ENCODE measurements at regions of chr11 and their contacts with region 1.

Region 1: GRCh38 chr11:130069684-130070108 is at the start of gene APLP2:
- DNase-seq: peak; percentile 96
- H3K4me3 ChIP-seq: peak within 1 kb of the TSS; percentile 80 to 91 (median 83)
- H3K27ac ChIP-seq: peak within 1 kb of the TSS; percentile 77
- H3K4me1 ChIP-seq: peaks cover 22% of the 10 kb centered on the region
- H3K27me3 ChIP-seq: no peaks in the 10 kb centered on the region
- CTCF ChIP-seq: no peak
- total RNA-seq, gene APLP2: 348 to 450 TPM

Region 2: DNA sequence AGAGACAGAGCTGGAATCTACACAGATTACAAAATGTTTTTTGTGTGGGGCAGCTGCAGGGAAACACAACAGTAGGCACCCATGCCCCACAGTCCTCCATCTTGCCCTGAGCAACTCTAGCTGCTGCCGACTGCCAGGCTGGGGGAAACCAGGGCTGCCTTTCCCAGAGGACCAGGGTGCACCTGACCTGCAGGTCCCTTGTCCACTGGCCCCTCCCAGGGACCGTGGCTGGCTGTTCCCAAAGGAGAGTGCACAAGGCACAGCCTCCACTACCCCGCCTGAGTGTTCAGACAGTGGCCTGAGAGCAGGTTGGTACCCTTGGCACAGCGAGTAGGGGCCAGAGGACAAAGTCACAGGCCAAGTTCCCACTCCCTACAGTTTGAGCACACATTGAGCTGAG is 512.3 kb before region 1 on chr11:
- CTCF ChIA-PET with region 1: no interaction called
- dilution Hi-C with region 1: no loop called
- in situ Hi-C with region 1: no loop called
- intact Hi-C with region 1: no loop called
- DNase-seq: no peak
- H3K4me3 ChIP-seq: no peak overlapping the region
- H3K27ac ChIP-seq: no peak overlapping the region
- H3K4me1 ChIP-seq: no peaks in the 10 kb centered on the region
- H3K27me3 ChIP-seq: peaks cover 3% of the 10 kb centered on the region
- CTCF ChIP-seq: no peak

Region 3: DNA sequence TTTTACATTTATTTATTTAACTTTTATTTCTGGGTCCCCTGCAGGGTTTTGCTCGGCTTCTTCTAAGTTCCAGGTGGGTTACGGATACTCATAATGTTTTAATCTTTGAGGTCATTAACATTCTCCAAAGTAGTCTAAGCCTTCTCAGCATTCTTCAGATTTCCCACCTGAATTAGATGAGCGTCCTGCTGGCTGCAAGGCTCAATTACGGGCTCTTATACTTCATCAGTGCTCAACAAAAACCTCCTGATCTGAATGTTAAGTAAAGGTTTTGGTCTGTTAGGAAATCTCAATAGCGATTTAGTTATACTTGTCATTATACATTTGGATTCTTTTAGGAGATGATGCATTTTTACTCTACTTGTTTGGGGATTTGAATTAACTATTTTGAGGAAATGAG is 147.0 kb before region 1 on chr11:
- CTCF ChIA-PET with region 1: interaction called, 3 read pairs
- dilution Hi-C with region 1: no loop called
- in situ Hi-C with region 1: no loop called
- intact Hi-C with region 1: loop called (anchors 2 kb)
- DNase-seq: no peak
- H3K4me3 ChIP-seq: no peak overlapping the region
- H3K27ac ChIP-seq: no peak overlapping the region
- H3K4me1 ChIP-seq: no peaks in the 10 kb centered on the region
- H3K27me3 ChIP-seq: no peaks in the 10 kb centered on the region
- CTCF ChIP-seq: no peak

Region 4: GRCh38 chr11:129946256-129946655 is 123.4 kb before region 1 on chr11:
- CTCF ChIA-PET with region 1: interaction called, 15 read pairs
- dilution Hi-C with region 1: no loop called
- in situ Hi-C with region 1: no loop called
- intact Hi-C with region 1: no loop called
- DNase-seq: no peak
- H3K4me3 ChIP-seq: no peak overlapping the region
- H3K27ac ChIP-seq: no peak overlapping the region
- H3K4me1 ChIP-seq: peaks cover 12% of the 10 kb centered on the region
- H3K27me3 ChIP-seq: no peaks in the 10 kb centered on the region
- CTCF ChIP-seq: no peak

Region 5: DNA sequence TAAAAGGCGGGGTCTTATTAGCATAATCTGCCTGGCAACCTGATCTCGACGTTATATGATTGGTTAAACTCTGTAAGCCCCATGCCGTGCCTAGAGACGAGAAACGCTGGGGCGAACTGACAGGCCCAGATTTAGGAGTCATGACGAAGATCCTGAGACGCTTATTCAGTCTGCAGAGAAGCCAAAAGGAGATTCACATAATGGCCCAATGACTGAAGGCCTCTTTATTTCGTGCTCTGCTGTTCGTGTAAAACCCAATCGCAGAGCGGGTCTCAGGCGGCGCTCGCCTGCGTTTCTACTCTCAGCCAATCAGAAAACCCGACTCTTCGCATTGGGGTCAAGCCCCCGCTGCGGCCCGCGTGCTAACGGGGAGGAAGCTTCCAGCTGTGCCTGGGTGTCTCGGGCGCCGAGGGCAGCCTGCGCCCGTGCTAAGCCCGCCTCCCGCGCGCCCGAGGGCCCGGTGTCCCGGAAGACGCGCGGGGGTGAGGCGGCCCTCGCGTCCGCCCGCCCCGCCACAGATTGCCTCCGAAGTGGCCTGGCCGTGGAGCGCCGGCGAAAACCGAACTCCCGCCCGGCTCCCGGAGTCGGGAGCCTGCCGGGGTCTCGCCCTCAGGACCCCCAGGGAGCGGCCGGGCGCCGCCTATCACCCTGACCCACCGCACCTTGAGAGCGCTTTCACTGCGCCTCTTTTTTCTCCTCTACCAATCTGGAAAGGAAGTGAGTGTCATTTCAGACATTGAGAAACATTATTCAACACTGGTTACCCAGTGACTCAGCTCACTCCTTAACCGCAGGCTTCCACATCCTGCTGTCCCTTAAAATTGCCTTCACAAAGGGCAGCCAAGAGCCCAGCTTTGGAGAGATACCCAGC is 66.6 kb before region 1 on chr11:
- CTCF ChIA-PET with region 1: no interaction called
- dilution Hi-C with region 1: no loop called
- in situ Hi-C with region 1: loop called in 1 of 2 experiments (anchors 10 kb)
- intact Hi-C with region 1: loop called (anchors 1 kb)
- DNase-seq: peak; percentile 95
- H3K4me3 ChIP-seq: peak overlapping the region; percentile 70 to 95 (median 79)
- H3K27ac ChIP-seq: peak overlapping the region; percentile 100
- H3K4me1 ChIP-seq: peaks cover 18% of the 10 kb centered on the region
- H3K27me3 ChIP-seq: no peaks in the 10 kb centered on the region
- CTCF ChIP-seq: no peak

Region 6: GRCh38 chr11:130037058-130037457 is 32.6 kb before region 1 on chr11:
- CTCF ChIA-PET with region 1: no interaction called
- dilution Hi-C with region 1: no loop called
- in situ Hi-C with region 1: no loop called
- intact Hi-C with region 1: loop called (anchors 1 kb)
- DNase-seq: peak; percentile 93
- H3K4me3 ChIP-seq: no peak overlapping the region
- H3K27ac ChIP-seq: peak overlapping the region; percentile 78
- H3K4me1 ChIP-seq: peaks cover 25% of the 10 kb centered on the region
- H3K27me3 ChIP-seq: no peaks in the 10 kb centered on the region
- CTCF ChIP-seq: no peak

Region 7: DNA sequence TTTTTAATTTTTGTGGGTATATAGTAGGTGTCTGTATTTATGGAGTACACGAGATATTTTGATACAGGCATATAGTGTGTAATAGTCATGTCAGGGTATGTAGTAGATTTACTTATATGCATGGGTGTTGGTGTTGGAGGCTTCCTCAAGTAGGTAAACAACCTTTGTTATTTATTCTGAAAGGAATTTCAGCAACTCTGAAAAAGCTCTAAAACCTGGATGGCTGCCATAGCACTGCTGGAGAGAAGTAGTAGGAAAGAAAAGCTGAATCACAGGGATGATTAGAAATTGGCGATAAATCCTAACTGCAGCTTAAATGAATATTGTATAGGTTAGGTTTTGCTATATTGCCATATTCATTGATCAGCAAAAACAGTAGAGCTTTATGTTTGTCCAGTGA is 45.5 kb after region 1 on chr11:
- CTCF ChIA-PET with region 1: no interaction called
- dilution Hi-C with region 1: no loop called
- in situ Hi-C with region 1: no loop called
- intact Hi-C with region 1: no loop called
- DNase-seq: no peak
- H3K4me3 ChIP-seq: no peak overlapping the region
- H3K27ac ChIP-seq: no peak overlapping the region
- H3K4me1 ChIP-seq: no peaks in the 10 kb centered on the region
- H3K27me3 ChIP-seq: no peaks in the 10 kb centered on the region
- CTCF ChIP-seq: no peak

Measured in mammary epithelial cell (primary cell).